ENCODE measurements at regions of chr1 and their contacts with region 1.

Region 1: GRCh38 chr1:27416387-27417111 is 24.1 kb downstream of the GPR3 start:
- H3K4me3 ChIP-seq: no peak overlapping the region
- H3K27ac ChIP-seq: no peak overlapping the region
- H3K4me1 ChIP-seq: no peaks in the 10 kb centered on the region
- CTCF ChIP-seq: no peak

Region 2: DNA sequence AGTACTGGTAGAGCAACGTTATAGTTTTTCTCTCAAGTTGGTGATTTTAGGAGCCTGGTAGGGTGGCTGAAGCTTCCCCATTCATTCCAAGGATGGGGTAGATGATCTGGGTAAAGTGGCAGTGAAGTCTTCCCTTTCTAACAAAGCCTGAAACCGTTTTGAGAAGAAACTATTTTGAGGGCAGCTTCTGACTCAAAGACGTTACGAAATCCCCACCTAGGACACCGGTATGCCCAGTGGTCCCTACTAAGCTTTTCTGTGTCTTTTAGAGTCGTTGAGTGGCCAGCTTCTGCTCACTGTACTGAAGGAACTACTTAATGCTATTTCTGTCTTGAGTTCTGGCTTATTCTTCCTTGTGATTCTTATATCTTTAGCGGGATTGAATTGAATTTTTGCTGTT is 180.7 kb before region 1 on chr1:
- CTCF ChIA-PET with region 1: no interaction called
- POLR2A ChIA-PET with region 1: no interaction called
- H3K4me3 ChIP-seq: peak overlapping the region; percentile 72
- H3K27ac ChIP-seq: no peak overlapping the region
- H3K4me1 ChIP-seq: no peaks in the 10 kb centered on the region
- CTCF ChIP-seq: no peak

Region 3: GRCh38 chr1:27430903-27431600 is 14.5 kb after region 1 on chr1:
- CTCF ChIA-PET with region 1: interaction called, 22 read pairs
- POLR2A ChIA-PET with region 1: interaction called, 3 read pairs
- H3K4me3 ChIP-seq: no peak overlapping the region
- H3K27ac ChIP-seq: no peak overlapping the region
- H3K4me1 ChIP-seq: no peaks in the 10 kb centered on the region; the same call in 1 of the 2 replicates
- CTCF ChIP-seq: no peak